ENCODE measurements at regions of chr19 and their contacts with region 1.

Region 1: DNA sequence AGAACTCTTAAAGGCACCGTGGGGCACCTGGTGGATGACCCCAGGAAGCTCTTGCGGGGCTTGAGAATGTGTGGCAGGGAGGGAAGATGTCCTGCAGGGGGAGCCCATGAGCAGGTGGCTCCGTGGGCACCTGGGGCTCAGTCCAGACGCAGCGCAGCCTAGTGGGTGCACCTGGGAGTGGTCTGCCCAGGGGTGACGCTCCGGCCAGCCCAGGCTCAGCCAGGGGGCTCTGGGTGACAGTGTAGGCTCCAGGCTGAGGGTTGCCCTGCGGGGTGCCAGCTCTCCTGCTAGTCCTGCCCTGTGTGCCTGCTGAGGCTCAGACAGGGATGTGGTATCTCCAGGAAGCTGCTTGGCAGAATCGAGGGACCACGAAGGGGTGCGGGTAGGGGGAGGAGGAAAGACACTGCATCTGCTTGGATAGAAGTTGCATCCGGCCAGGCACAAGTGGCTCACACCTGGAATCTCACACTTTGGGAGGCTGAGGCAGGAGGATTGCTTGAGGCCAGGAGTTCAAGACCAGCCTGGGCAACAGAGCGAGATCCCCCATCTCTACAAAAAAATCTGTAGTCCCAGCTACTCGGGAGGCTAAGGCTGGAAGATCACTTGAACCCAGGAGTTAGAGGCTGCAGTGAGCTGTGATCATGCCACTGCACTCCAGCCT is 15.0 kb upstream of the PGLS start:
- DNase-seq: peak; percentile 76
- ATAC-seq: peak; percentile 100
- H3K4me3 Mint-ChIP-seq: no peak overlapping the region
- H3K27ac Mint-ChIP-seq: no peak overlapping the region
- H3K4me1 Mint-ChIP-seq: peaks cover 27% of the 10 kb centered on the region
- H3K27me3 Mint-ChIP-seq: no peaks in the 10 kb centered on the region
- CTCF ChIP-seq: no peak

Region 2: DNA sequence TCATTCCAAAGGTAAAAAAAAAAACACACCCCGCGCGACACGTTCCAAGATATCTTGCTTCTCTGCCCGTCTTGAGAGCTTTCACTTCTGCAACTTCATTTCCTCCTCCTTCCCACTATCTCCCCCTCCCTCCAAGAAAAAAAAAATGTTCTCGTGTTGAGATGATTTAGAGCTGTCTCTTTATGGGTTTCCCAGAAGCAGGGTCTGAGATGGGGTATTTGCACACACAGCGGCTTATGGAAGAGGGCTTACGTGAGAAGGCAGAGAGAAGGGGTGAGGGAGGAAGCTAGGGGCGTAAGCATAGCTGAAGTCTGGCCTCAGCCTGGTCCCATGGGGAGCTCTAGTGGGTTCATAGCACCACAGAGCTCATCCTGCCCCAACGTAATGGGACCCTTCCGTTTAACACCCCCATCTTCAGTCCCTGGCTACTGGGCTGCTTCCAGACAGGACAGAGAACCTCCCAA is 312.6 kb before region 1 on chr19:
- CTCF ChIA-PET with region 1: no interaction called
- POLR2A ChIA-PET with region 1: no interaction called
- intact Hi-C with region 1: no loop called
- DNase-seq: peak; percentile 42
- ATAC-seq: peak; percentile 85
- H3K4me3 Mint-ChIP-seq: peak overlapping the region; percentile 79
- H3K27ac Mint-ChIP-seq: peak overlapping the region; percentile 99
- H3K4me1 Mint-ChIP-seq: peaks cover 32% of the 10 kb centered on the region
- H3K27me3 Mint-ChIP-seq: no peaks in the 10 kb centered on the region
- CTCF ChIP-seq: no peak

Region 3: DNA sequence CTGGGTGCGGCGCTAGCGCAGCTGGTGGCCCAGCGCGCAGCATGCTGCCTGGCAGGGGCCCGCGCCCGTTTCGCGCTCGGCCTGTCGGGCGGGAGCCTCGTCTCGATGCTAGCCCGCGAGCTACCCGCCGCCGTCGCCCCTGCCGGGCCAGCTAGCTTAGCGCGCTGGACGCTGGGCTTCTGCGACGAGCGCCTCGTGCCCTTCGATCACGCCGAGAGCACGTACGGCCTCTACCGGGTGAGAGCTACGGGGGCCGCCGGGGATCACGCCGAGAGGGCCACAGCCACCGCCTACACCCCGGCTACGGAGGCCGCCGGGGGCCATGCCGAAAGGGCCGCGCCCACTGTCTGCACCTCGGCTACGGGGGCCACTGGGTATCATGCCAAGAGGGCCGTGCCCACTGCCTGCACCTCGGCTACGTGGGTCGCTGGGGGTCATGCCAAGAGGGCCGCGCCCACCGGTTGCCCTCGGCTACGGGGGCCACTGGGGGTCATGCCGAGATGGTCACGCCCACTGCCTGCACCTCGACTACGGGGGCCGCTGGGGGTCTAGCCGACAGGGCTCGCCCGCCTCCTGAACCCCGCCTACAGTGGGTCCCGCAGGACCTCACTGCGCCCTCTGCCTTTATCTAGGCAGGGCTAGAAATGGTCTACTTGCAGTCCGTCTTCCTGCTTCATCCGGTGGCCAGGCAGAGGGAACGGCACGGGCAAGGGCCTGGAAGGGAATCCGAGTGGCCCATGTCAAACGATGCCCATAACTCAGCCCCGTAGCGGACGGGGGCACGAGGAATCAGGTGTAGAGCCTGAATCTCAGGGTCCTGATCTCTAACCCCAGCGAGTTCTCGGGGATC is 15.5 kb after region 1 on chr19:
- CTCF ChIA-PET with region 1: interaction called, 14 read pairs
- POLR2A ChIA-PET with region 1: interaction called, 18 read pairs
- intact Hi-C with region 1: loop called (anchors 1 kb)
- DNase-seq: peak; percentile 95
- ATAC-seq: peak; percentile 82
- H3K4me3 Mint-ChIP-seq: peak overlapping the region; percentile 100
- H3K27ac Mint-ChIP-seq: peak overlapping the region; percentile 98
- H3K4me1 Mint-ChIP-seq: peaks cover 50% of the 10 kb centered on the region
- H3K27me3 Mint-ChIP-seq: no peaks in the 10 kb centered on the region
- CTCF ChIP-seq: no peak

Region 4: GRCh38 chr19:17530586-17530985 is 34.1 kb after region 1 on chr19:
- CTCF ChIA-PET with region 1: interaction called, 19 read pairs
- POLR2A ChIA-PET with region 1: interaction called, 11 read pairs
- intact Hi-C with region 1: loop called (anchors 1 kb)
- DNase-seq: no peak
- ATAC-seq: no peak
- H3K4me3 Mint-ChIP-seq: peak overlapping the region; percentile 90
- H3K27ac Mint-ChIP-seq: peak overlapping the region; percentile 94
- H3K4me1 Mint-ChIP-seq: peaks cover 60% of the 10 kb centered on the region
- H3K27me3 Mint-ChIP-seq: no peaks in the 10 kb centered on the region
- CTCF ChIP-seq: no peak

Region 5: DNA sequence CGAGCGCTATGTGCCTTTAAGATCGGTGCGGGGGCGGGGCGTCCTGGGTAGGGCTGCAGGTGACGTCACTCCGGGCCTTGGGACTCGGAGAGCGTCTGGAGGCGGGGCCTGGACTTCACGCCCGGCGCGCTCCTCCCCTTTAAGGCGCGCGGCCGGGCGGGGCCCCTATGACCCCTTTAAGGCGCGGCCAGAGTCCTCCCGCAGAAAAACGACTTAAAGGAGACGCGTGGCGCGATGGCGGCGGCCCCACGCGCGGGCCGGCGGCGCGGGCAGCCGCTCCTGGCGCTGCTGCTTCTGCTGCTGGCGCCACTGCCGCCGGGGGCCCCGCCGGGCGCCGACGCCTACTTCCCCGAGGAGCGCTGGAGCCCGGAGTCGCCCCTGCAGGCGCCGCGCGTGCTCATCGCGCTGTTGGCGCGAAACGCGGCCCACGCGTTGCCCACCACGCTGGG is 59.0 kb after region 1 on chr19 and contains the start of gene COLGALT1:
- CTCF ChIA-PET with region 1: interaction called, 13 read pairs
- POLR2A ChIA-PET with region 1: interaction called, 16 read pairs
- intact Hi-C with region 1: loop called (anchors 1 kb)
- DNase-seq: peak; percentile 94
- ATAC-seq: peak; percentile 93
- H3K4me3 Mint-ChIP-seq: peak within 1 kb of the TSS; percentile 84
- H3K27ac Mint-ChIP-seq: peak within 1 kb of the TSS; percentile 75
- H3K4me1 Mint-ChIP-seq: peaks cover 23% of the 10 kb centered on the region
- H3K27me3 Mint-ChIP-seq: no peaks in the 10 kb centered on the region
- CTCF ChIP-seq: no peak
- total RNA-seq, gene COLGALT1: 69.2 and 80.3 TPM in 2 replicates

Region 6: DNA sequence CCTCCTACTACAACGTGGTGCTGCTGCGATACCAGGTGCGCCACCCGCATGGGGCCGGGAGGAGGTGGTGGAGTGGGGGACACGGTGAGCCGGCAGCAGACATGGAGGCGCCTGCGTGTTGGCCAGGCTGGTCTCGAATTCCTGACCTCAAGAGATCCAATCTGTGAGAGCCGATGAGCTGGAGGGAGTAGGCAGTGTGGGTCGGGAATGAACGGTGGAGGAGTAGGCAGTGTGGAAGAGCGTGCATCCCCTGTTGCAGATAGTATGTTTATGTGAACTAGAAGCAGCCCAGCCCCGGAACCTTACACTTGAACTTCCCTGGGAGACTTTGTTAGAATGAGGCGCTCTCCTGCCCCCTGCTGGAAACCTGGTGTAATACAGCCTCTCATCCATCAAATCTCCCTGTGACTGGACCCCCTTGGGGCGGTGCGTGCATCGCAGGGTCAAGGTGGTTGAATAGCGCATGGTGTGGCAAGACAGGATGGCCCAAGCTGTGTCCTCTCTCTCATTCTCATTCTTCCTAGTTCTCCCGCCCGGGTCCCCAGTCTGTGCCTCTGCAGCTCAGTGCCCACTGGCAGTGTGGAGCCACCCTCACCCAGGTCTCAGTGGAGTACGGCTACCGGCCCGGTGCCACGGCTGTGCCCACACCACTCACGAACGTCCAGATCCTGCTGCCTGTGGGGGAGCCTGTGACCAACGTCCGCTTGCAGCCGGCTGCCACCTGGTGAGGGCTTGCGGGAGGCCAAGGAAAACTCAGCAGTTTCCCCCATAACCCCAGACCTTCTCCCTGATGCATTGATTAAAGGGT is 287.9 kb after region 1 on chr19:
- CTCF ChIA-PET with region 1: interaction called, 6 read pairs
- POLR2A ChIA-PET with region 1: interaction called, 4 read pairs
- intact Hi-C with region 1: loop called (anchors 1 kb)
- DNase-seq: peak; percentile 62
- ATAC-seq: peak; percentile 89
- H3K4me3 Mint-ChIP-seq: no peak overlapping the region
- H3K27ac Mint-ChIP-seq: no peak overlapping the region
- H3K4me1 Mint-ChIP-seq: peaks cover 9% of the 10 kb centered on the region
- H3K27me3 Mint-ChIP-seq: no peaks in the 10 kb centered on the region
- CTCF ChIP-seq: no peak

Measured in activated B cell treated with CpG ODN at 0.5 μM for 24 hours (primary cell).